Activated CD4-positive, alpha-beta T cell treated with anti-CD3 and anti-CD28 coated beads for 36 hours (primary cell): ENCODE measurements at regions of chr13 and their contacts with region 1.

Region 1: DNA sequence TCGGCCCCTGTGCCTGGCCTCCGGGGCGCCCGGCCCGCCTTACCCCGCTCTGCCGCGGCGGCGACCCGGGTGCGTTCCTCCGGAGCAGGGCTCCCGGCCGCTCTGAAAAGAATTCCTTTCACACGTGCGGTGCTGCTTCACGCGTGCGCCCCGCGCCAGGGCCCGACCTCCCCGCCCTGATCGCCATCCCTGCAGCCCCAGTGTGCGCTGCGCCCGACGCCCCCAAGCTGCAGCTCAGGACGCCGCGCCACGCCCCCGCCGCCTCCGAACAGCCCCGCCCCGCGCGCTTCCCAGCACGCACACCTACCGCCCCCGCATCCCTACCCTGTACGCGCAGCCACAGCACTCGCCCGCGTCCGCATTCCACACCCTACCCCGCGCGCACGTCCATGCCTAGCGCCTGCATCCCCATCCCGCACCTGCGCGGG is at the start of gene GJA3:
- DNase-seq: peak; percentile 78
- ATAC-seq: peak; percentile 52
- H3K4me3 Mint-ChIP-seq: peak within 1 kb of the TSS; percentile 75
- H3K27ac Mint-ChIP-seq: no peak within 1 kb of the TSS
- H3K4me1 Mint-ChIP-seq: peaks cover 15% of the 10 kb centered on the region
- H3K27me3 Mint-ChIP-seq: peaks cover 39% of the 10 kb centered on the region
- total RNA-seq, gene GJA3: 0.26 to 0.32 TPM

Region 2: DNA sequence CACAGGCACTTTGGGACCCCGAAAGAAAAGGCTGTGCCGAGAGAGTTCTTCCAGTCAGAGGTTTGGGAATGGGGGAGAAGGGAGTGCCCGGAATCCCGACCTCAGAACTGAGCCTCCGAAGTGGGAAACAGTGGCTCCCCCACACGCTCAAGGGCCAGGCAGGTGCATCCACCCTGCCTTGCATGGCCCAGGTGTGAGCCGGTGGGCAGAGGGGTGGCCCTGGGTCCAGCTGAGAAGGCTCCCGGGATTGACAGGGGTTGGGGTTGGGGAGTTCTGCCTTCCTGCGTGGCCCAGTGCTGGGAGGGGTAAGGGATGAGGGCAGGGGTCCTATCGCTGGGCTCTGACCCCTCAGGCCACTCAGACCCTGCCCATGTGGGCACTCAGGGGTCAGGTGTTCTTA is 815.7 kb before region 1 on chr13:
- CTCF ChIA-PET with region 1: no interaction called
- POLR2A ChIA-PET with region 1: no interaction called
- intact Hi-C with region 1: loop called in 1 of 2 experiments (anchors 10 kb)
- DNase-seq: no peak
- ATAC-seq: no peak
- H3K4me3 Mint-ChIP-seq: peak overlapping the region; percentile 64
- H3K27ac Mint-ChIP-seq: no peak overlapping the region
- H3K4me1 Mint-ChIP-seq: peaks cover 4% of the 10 kb centered on the region
- H3K27me3 Mint-ChIP-seq: peaks cover 30% of the 10 kb centered on the region

Region 3: GRCh38 chr13:19573120-19573716 is 587.6 kb before region 1 on chr13:
- CTCF ChIA-PET with region 1: no interaction called
- POLR2A ChIA-PET with region 1: no interaction called
- intact Hi-C with region 1: no loop called
- DNase-seq: no peak
- ATAC-seq: no peak
- H3K4me3 Mint-ChIP-seq: no peak overlapping the region
- H3K27ac Mint-ChIP-seq: no peak overlapping the region
- H3K4me1 Mint-ChIP-seq: no peaks in the 10 kb centered on the region
- H3K27me3 Mint-ChIP-seq: peaks cover 3% of the 10 kb centered on the region

Region 4: GRCh38 chr13:19927117-19927748 is 233.6 kb before region 1 on chr13:
- CTCF ChIA-PET with region 1: interaction called, 3 read pairs
- POLR2A ChIA-PET with region 1: no interaction called
- intact Hi-C with region 1: loop called (anchors 1 kb)
- DNase-seq: no peak
- ATAC-seq: no peak
- H3K4me3 Mint-ChIP-seq: no peak overlapping the region
- H3K27ac Mint-ChIP-seq: no peak overlapping the region
- H3K4me1 Mint-ChIP-seq: no peaks in the 10 kb centered on the region
- H3K27me3 Mint-ChIP-seq: no peaks in the 10 kb centered on the region

Region 5: DNA sequence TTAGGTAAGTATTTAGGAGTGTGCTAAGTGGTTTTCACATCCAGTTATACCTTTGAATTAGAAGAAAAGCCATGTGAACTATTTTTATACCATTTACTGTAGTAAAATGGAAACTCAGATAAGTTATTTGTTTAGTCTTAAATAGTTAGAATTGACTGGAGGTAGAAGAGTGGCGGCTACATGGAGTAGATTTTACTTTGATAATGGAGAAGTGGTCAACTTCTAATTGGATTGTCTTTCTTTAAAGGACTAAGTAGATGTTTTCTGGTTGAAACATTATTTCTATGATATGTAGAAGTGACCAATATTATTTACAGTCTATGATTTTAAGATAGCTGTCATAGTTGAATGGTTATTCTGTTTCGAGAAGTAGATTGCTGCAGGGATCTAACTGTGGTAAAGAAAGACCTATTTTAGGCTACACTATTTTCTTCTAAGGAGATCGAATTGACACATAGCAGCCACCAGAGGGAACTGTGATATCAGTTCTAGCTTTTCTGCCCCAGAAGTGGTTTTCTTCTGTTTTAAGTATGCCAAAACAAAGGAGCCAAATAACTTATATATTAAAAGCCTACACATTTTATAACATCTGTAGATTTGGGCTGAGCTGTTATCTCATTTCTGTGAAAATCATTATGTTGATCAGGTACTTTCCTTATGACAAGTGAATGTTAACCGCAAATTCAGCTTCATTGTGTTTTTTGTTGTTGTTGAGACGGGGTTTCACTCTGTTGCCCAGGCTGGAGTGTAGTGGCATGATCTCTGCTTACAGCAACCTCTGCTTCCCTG is 176.2 kb before region 1 on chr13:
- CTCF ChIA-PET with region 1: interaction called, 6 read pairs
- POLR2A ChIA-PET with region 1: no interaction called
- intact Hi-C with region 1: loop called (anchors 1 kb)
- DNase-seq: peak; percentile 12
- ATAC-seq: peak; percentile 68
- H3K4me3 Mint-ChIP-seq: no peak overlapping the region
- H3K27ac Mint-ChIP-seq: peak overlapping the region; percentile 34
- H3K4me1 Mint-ChIP-seq: peaks cover 38% of the 10 kb centered on the region
- H3K27me3 Mint-ChIP-seq: no peaks in the 10 kb centered on the region

Region 6: DNA sequence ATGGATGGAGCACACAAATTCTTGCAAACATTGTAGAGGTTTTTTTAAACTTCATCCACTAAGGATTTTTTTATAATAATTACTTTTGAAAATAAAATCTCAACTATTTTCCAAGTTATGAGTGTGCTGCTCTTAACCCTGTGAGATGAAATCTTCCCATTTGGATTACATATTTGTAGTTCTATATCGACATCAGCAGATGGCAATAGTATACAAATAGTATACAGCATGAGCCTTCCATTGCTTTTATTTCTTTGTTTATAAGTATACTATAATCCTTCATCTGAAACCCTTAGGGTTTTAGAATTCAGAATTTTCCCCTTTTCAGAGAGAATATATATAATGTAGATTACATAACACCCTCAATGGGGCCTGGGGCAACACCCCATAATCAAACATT is 70.5 kb before region 1 on chr13:
- CTCF ChIA-PET with region 1: interaction called, 3 read pairs
- POLR2A ChIA-PET with region 1: no interaction called
- intact Hi-C with region 1: loop called (anchors 2 kb)
- DNase-seq: no peak
- ATAC-seq: no peak
- H3K4me3 Mint-ChIP-seq: no peak overlapping the region
- H3K27ac Mint-ChIP-seq: no peak overlapping the region
- H3K4me1 Mint-ChIP-seq: no peaks in the 10 kb centered on the region
- H3K27me3 Mint-ChIP-seq: no peaks in the 10 kb centered on the region

Region 7: DNA sequence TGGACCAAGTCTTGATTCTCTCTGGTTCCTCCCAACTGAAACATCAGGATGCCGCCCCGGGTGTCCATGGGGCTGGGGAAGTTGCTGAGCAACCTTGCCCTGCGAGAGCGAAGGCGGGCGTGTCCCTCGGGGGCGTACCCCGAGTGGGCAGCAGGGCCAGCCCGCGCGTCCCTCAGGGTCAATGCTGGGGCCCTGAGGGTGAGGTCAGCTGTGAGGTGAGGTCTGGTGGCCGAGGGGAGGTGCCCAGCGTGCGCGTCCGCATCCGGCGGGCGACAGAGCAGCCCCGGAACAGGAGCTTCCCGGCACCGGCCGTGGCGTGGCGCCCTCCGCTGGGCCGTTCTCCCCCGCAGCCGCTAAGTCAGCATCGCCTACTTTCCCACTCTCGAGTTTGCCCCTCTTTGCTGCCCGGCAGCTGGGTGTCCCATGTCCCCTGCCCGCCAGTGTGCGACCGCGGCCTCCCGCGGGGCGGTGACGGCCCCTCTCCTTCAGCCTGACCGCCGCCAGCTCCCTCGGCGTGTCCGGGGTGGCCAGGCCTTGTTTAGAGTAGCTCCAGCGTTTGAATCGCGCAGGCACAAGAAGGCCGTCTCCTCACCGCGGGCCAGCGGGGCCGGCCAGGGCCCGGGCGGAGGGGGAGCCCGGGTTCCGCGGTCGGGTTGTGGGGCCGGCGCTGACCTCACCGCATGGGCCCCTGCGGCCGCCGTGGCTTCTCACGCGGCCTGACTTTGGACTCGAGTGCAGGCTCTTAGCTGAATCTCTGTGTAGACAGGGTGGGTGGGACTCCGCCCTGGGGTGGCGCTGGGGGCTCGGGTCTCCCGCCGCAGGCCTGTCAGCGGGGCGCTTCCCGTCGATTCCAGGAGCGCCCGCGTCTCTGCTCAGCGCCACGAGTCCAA is 33.0 kb before region 1 on chr13:
- CTCF ChIA-PET with region 1: interaction called, 5 read pairs
- POLR2A ChIA-PET with region 1: interaction called, 4 read pairs
- intact Hi-C with region 1: loop called (anchors 2 kb)
- DNase-seq: peak; percentile 64
- ATAC-seq: peak; percentile 72
- H3K4me3 Mint-ChIP-seq: peak overlapping the region; percentile 62
- H3K27ac Mint-ChIP-seq: peak overlapping the region; percentile 34
- H3K4me1 Mint-ChIP-seq: no peaks in the 10 kb centered on the region
- H3K27me3 Mint-ChIP-seq: peaks cover 11% of the 10 kb centered on the region

Region 8: DNA sequence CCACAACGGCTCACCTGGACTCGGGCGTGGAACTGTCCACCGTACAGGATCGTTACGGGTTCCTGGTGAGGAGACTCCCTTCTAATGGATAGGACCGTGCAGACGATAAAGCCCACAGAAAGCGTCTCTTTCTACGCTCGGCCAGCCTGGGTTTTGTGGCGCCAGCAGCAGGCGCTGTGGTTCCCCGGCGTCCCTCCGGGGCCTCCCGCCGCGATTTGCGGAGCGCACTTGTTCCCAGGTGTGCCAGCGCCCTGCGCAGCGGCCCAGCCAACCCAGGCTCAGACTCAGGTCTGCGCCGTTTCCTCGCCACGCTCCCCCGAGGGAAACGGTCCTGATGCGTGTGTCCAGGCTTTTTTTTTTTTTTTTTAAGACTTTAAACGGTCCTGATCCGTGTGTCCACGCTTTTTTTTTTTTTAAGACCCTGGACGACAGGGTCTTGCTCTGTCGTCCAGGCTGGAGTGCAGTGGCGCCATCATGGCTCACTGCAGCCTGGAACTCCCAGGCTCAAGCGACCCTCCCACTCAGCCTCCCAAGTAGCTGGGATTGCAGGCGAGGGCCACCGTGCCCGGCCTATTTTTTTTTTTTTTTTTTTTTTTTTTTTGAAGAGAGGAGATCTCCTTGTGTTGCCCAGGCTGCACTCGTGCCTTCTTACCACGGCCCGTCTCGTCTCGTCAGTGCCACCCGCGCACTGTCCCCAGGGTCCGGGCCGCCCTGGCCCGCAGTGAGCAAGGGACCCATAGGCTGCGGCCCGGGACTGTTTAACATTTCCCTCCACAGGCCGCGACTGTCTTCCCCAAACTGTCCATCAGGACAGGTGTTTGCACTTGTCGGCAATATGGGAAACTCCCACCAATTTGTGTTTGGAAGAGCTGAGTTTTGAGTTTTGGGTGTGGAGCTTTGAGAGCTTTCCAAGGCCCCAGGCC is 23.8 kb before region 1 on chr13:
- CTCF ChIA-PET with region 1: interaction called, 4 read pairs
- POLR2A ChIA-PET with region 1: no interaction called
- intact Hi-C with region 1: loop called in 1 of 2 experiments (anchors 1 kb)
- DNase-seq: peak; percentile 79
- ATAC-seq: peak; percentile 92
- H3K4me3 Mint-ChIP-seq: peak overlapping the region; percentile 16
- H3K27ac Mint-ChIP-seq: no peak overlapping the region
- H3K4me1 Mint-ChIP-seq: peaks cover 2% of the 10 kb centered on the region
- H3K27me3 Mint-ChIP-seq: peaks cover 40% of the 10 kb centered on the region